ENCODE measurements at regions of chr9 and their contacts with region 1.

Region 1: GRCh38 chr9:126398403-126399058 is 71.9 kb downstream of the MVB12B start:
- DNase-seq: peak in 1 of 2 experiments; percentile 84
- H3K4me3 ChIP-seq: no peak overlapping the region
- H3K27ac ChIP-seq: no peak overlapping the region
- H3K4me1 ChIP-seq: no peaks in the 10 kb centered on the region; the same call in 1 of the 2 replicates
- H3K27me3 ChIP-seq: no peaks in the 10 kb centered on the region
- CTCF ChIP-seq: peak; percentile 98

Region 2: DNA sequence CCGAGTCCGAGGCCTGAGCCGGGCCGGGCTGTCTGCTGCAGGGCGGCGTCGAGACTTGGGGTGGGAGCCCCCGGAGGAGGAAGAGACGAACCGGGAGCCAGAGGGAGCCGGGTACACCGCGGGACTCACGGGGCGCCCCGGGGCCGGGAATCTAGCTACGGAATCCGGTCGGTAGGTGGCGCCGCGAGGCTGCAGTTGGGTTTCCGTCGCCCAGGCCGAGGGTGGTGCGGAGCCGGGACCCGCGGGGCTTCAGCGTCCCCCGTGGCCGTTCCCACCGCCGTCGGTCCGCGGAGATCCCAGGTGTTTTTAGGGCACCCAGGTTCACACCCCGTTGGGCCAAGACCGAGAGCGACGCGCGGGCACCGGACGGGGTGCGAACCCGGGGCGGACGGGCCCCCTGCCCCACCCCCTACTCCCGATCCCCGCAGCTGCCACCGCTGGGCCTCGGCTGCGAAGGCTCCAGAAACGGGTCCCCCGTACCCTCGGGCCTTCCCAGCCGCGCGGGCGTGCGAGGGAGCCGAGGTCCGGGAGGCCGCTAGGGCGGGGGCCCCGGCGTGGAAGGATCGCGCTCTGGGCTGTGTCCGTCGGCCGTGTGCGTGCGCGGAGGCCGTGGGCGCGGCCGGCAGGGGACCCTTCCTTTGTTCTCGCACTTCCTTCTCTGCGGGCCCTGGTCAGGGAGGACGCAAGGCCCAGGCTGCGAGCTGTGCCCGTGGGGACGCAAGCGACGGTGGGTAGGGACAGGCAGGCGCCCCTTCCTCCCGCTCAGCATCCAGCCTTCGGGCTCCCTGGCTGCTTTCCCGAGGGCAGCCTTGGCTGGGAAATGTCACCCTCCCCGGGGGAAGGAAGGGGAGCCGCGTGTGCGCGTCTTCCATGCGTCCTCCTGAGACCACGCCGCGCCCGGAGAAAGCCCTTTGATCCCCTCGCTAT is 990.3 kb before region 1 on chr9:
- CTCF ChIA-PET with region 1: interaction called, 3 read pairs
- POLR2A ChIA-PET with region 1: no interaction called
- intact Hi-C with region 1: loop called (anchors 1 kb)
- DNase-seq: peak in 1 of 2 experiments; percentile 81
- H3K4me3 ChIP-seq: peak overlapping the region; percentile 65
- H3K27ac ChIP-seq: no peak overlapping the region
- H3K4me1 ChIP-seq: no peaks in the 10 kb centered on the region
- H3K27me3 ChIP-seq: no peaks in the 10 kb centered on the region
- CTCF ChIP-seq: peak; percentile 88

Region 3: DNA sequence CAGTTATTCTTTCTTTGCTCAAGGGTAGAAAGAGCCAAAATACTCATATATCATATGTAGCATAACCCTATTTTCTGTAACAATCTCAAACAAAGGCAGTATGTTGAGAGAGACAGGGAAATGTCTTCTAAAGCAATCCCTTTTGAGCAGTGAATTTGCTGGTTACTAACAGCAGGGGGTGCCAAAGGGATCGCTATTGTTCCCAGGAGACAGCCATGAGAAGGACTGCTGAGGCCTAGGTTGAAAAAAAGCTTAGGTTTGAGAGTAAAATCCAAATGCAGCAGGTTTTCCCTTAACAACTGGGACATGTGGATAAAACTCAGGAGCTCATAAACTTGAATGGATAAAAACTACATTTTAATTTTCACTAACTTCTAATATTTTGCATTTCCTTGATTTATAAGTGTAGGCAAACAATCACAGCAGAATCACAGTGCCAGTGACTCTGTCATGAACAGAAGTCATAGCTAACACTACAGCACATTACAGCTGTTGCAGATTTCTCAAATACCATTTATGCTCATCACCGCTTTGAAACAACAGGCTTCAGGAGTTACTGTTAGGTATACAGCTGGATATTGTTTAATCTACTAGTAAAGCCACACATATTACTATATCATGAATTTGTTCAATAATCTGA is 840.0 kb before region 1 on chr9:
- CTCF ChIA-PET with region 1: no interaction called
- POLR2A ChIA-PET with region 1: no interaction called
- intact Hi-C with region 1: loop called (anchors 5 kb)
- DNase-seq: peak; percentile 56 to 57
- H3K4me3 ChIP-seq: no peak overlapping the region
- H3K27ac ChIP-seq: no peak overlapping the region
- H3K4me1 ChIP-seq: no peaks in the 10 kb centered on the region
- H3K27me3 ChIP-seq: no peaks in the 10 kb centered on the region
- CTCF ChIP-seq: peak; percentile 84

Region 4: DNA sequence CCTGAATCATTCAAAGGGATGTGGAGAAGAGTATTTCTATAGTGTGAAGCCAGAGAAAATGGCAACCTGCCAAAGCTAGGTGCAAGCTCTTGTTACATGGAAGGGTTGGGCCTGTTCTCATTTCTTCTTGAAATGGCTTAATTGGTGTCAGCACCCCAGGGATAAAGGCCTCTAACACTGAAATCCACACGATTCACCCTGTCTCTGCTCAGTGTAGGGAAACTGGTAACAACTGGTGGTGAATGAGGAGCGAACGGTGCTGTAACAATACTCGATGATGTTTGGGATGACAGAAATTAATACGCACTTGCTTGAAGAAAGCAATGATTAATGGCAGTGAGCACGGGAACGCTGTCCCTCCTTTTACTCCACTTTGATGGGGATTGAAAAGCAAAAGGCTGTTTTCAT is 635.1 kb before region 1 on chr9:
- CTCF ChIA-PET with region 1: no interaction called
- POLR2A ChIA-PET with region 1: no interaction called
- intact Hi-C with region 1: loop called (anchors 5 kb)
- DNase-seq: peak in 1 of 2 experiments; percentile 20
- H3K4me3 ChIP-seq: no peak overlapping the region
- H3K27ac ChIP-seq: no peak overlapping the region
- H3K4me1 ChIP-seq: no peaks in the 10 kb centered on the region
- H3K27me3 ChIP-seq: no peaks in the 10 kb centered on the region
- CTCF ChIP-seq: no peak

Region 5: GRCh38 chr9:126228781-126229444 is 169.6 kb before region 1 on chr9:
- CTCF ChIA-PET with region 1: no interaction called
- POLR2A ChIA-PET with region 1: no interaction called
- intact Hi-C with region 1: loop called (anchors 2 kb)
- DNase-seq: peak; percentile 44 to 70
- H3K4me3 ChIP-seq: no peak overlapping the region
- H3K27ac ChIP-seq: no peak overlapping the region
- H3K4me1 ChIP-seq: no peaks in the 10 kb centered on the region
- H3K27me3 ChIP-seq: peaks cover 85% of the 10 kb centered on the region
- CTCF ChIP-seq: peak; percentile 91

Region 6: DNA sequence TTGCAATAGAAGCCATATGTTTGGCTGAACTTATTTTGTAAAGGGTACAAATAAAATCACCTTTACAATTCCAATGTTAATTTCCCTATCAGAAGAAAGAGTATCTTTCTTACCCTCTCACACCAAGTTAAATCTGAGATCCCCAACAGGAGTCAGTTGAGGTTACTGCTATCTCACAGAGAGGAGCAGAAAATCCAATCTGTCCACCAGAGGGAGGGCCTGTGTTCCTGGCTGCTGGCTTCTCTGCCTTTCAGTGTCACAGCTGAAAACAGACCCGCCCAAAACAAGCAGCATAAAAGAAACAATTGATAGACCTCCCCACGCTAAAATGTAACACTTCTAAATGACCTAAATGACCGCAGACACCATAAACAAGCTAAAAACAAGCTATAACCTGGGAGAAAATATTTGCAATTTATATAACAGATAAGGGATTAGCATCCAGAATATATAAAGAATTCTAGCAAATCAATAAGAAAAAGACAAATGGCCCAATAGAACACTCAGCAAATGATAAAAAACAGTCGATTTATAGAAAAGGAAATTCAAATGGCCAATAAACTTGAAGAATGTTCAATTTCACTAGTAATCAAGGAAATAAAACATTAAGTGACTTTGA is 96.4 kb before region 1 on chr9:
- CTCF ChIA-PET with region 1: interaction called, 4 read pairs
- POLR2A ChIA-PET with region 1: interaction called, 4 read pairs
- intact Hi-C with region 1: loop called (anchors 1 kb)
- DNase-seq: peak; percentile 40 to 51
- H3K4me3 ChIP-seq: no peak overlapping the region
- H3K27ac ChIP-seq: no peak overlapping the region
- H3K4me1 ChIP-seq: no peaks in the 10 kb centered on the region
- H3K27me3 ChIP-seq: no peaks in the 10 kb centered on the region
- CTCF ChIP-seq: peak; percentile 78

Region 7: GRCh38 chr9:126490871-126491567 is 92.5 kb after region 1 on chr9:
- CTCF ChIA-PET with region 1: no interaction called
- POLR2A ChIA-PET with region 1: no interaction called
- intact Hi-C with region 1: loop called (anchors 5 kb)
- DNase-seq: peak; percentile 50 to 53
- H3K4me3 ChIP-seq: no peak overlapping the region
- H3K27ac ChIP-seq: no peak overlapping the region
- H3K4me1 ChIP-seq: no peaks in the 10 kb centered on the region
- H3K27me3 ChIP-seq: no peaks in the 10 kb centered on the region
- CTCF ChIP-seq: peak; percentile 95

Measured in PC-9 (cell line).